HEK293 (cell line): ENCODE measurements at regions of chr1 and their contacts with region 1.

Region 1: DNA sequence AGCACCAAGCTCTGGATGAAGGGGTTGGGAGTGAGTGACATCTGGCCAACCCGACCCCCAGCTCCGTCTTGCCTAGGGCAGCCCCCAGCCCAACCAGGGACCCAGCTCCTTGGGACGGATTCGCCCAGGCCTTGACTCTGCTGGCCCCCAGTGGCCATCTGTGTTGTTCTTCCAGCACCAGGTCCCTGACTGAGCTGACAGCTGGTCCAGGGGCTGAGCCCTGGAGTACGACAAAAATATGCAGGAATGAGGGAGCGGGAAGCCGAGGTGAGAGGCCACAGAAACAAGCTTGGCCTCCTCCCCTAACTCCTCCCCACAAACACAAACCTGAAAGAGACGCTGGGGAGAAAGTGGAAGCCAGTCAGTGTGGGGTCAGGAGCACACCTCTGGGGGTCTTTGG is 55.0 kb upstream of the PAX7 start:
- H3K4me3 ChIP-seq: no peak overlapping the region
- H3K27ac ChIP-seq: no peak overlapping the region
- H3K4me1 ChIP-seq: no peaks in the 10 kb centered on the region
- CTCF ChIP-seq: peak; percentile 68

Region 2: GRCh38 chr1:18299441-18300338 is 275.9 kb before region 1 on chr1:
- CTCF ChIA-PET with region 1: interaction called, 17 read pairs
- POLR2A ChIA-PET with region 1: no interaction called
- H3K4me3 ChIP-seq: no peak overlapping the region
- H3K27ac ChIP-seq: no peak overlapping the region
- H3K4me1 ChIP-seq: no peaks in the 10 kb centered on the region
- CTCF ChIP-seq: 0 out of 2 replicates have a peak, but pooled peaks have one; percentile 28

Region 3: GRCh38 chr1:18549906-18550305 is 25.7 kb before region 1 on chr1:
- CTCF ChIA-PET with region 1: interaction called, 30 read pairs
- POLR2A ChIA-PET with region 1: no interaction called
- H3K4me3 ChIP-seq: no peak overlapping the region
- H3K27ac ChIP-seq: no peak overlapping the region
- H3K4me1 ChIP-seq: no peaks in the 10 kb centered on the region
- CTCF ChIP-seq: no peak

Region 4: DNA sequence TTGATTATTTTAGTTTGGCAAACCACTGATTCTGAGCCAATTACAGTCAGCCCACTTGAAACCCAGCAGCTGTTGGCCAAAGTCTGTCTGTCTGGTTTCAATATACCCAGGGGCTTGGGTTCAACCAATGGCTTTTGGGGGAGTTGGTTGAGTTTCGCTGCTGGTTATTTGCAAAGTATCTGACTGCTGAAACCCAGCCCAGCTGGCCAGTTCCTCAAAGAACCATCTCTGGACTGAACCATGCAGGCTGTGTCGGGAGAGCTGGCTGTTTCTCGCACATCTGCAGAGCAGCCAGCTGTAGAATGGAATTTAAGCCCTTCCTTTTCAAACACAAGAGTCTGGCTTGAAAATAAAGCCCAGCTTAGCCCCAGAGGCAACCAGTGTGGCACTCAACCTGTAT is 10.9 kb before region 1 on chr1:
- CTCF ChIA-PET with region 1: interaction called, 18 read pairs
- POLR2A ChIA-PET with region 1: no interaction called
- H3K4me3 ChIP-seq: no peak overlapping the region
- H3K27ac ChIP-seq: no peak overlapping the region
- H3K4me1 ChIP-seq: no peaks in the 10 kb centered on the region
- CTCF ChIP-seq: no peak